ENCODE measurements at regions of chr15 and their contacts with region 1.

Region 1: GRCh38 chr15:45714590-45715488 is 80.0 kb downstream of the SQOR start:
- ATAC-seq: peak; percentile 77 to 96 (median 86)
- H3K4me3 ChIP-seq: no peak overlapping the region
- H3K27ac ChIP-seq: no peak overlapping the region
- H3K4me1 ChIP-seq: peaks cover 6 to 7% of the 10 kb centered on the region in 2 donors

Region 2: GRCh38 chr15:45468294-45468693 is 246.5 kb before region 1 on chr15:
- in situ Hi-C with region 1: no loop called
- ATAC-seq: peak in 3 of 8 experiments; percentile 12 to 75 (median 74)
- H3K4me3 ChIP-seq: no peak overlapping the region
- H3K27ac ChIP-seq: no peak overlapping the region
- H3K4me1 ChIP-seq: peaks cover 3 to 6% of the 10 kb centered on the region in 2 donors

Region 3: GRCh38 chr15:45795440-45796069 is 80.7 kb after region 1 on chr15:
- in situ Hi-C with region 1: loop called in 2 of 9 experiments (anchors 10 kb)
- ATAC-seq: peak; percentile 52 to 83 (median 70)
- H3K4me3 ChIP-seq: no peak overlapping the region
- H3K27ac ChIP-seq: no peak overlapping the region
- H3K4me1 ChIP-seq: peaks cover 6 to 23% of the 10 kb centered on the region in 2 donors

Region 4: GRCh38 chr15:45948181-45948621 is 233.4 kb after region 1 on chr15:
- in situ Hi-C with region 1: no loop called
- ATAC-seq: no peak
- H3K4me3 ChIP-seq: no peak overlapping the region
- H3K27ac ChIP-seq: no peak overlapping the region
- H3K4me1 ChIP-seq: peaks cover 0 to 4% of the 10 kb centered on the region in 2 donors

Measured in motor neuron (in vitro differentiated cells).